ENCODE measurements at regions of chr3 and their contacts with region 1.

Region 1: GRCh38 chr3:108578064-108578463 is 11.2 kb downstream of the CIP2A start:
- DNase-seq: no peak
- H3K4me3 ChIP-seq: no peak overlapping the region
- H3K27ac ChIP-seq: no peak overlapping the region
- H3K4me1 ChIP-seq: no peaks in the 10 kb centered on the region
- CTCF ChIP-seq: no peak

Region 2: DNA sequence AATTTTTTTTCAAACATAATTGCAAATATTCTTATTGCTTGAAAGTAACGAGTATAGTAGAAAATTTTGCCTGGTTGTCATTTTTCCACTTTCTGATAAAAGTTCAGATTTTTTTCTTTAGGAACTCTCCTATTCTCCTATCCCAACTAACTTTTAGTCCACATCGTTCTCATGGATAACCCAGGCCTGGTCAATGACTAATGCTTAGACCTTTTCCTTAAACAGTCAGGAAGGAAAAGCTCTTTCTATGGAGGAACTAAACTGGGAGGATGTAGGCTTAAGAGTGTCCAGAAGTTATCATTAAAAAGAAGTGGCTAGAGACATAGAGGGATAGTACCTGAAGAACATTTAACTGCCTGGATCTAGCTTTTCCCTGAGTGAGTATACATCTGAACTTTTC is 15.5 kb before region 1 on chr3:
- CTCF ChIA-PET with region 1: no interaction called
- POLR2A ChIA-PET with region 1: interaction called, 4 read pairs
- intact Hi-C with region 1: loop called (anchors 2 kb)
- DNase-seq: no peak
- H3K4me3 ChIP-seq: no peak overlapping the region
- H3K27ac ChIP-seq: no peak overlapping the region
- H3K4me1 ChIP-seq: no peaks in the 10 kb centered on the region
- CTCF ChIP-seq: no peak

Region 3: GRCh38 chr3:108623504-108623903 is 45.4 kb after region 1 on chr3:
- CTCF ChIA-PET with region 1: no interaction called
- POLR2A ChIA-PET with region 1: no interaction called
- intact Hi-C with region 1: no loop called
- DNase-seq: no peak
- H3K4me3 ChIP-seq: no peak overlapping the region
- H3K27ac ChIP-seq: no peak overlapping the region
- H3K4me1 ChIP-seq: no peaks in the 10 kb centered on the region
- CTCF ChIP-seq: no peak

Measured in OCI-LY7 (cell line).